ENCODE measurements at regions of chr21 and their contacts with region 1.

Region 1: GRCh38 chr21:42084079-42084478 is 13.0 kb downstream of the UMODL1 start:
- DNase-seq: no peak
- ATAC-seq: no peak
- H3K4me3 ChIP-seq: no peak overlapping the region
- H3K4me3 Mint-ChIP-seq: no peak overlapping the region
- H3K27ac ChIP-seq: no peak overlapping the region
- H3K27ac Mint-ChIP-seq: no peak overlapping the region
- H3K4me1 ChIP-seq: peaks cover 6% of the 10 kb centered on the region
- H3K4me1 Mint-ChIP-seq: peaks cover 12% of the 10 kb centered on the region
- H3K27me3 ChIP-seq: no peaks in the 10 kb centered on the region
- H3K27me3 Mint-ChIP-seq: no peaks in the 10 kb centered on the region
- CTCF ChIP-seq: no peak

Region 2: DNA sequence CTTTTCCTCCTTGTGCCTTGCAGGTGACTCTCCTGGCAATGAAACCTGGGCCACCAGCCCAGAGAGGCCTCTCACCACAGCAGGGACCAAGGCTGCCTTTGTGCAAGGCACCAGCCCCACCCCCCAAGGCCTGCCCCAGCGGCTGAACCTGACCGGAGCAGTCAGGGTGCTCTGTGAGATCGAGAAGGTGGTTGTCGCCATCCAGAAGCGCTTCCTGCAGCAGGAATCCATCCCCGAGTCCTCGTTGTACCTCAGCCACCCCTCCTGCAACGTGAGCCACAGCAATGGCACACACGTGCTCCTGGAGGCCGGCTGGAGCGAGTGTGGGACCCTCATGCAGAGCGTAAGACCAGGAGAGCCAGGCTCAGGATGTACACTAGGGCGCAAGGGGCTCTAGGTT is 38.7 kb after region 1 on chr21:
- CTCF ChIA-PET with region 1: no interaction called
- POLR2A ChIA-PET with region 1: no interaction called
- intact Hi-C with region 1: loop called in 1 of 2 experiments (anchors 1 kb)
- DNase-seq: no peak
- ATAC-seq: no peak
- H3K4me3 ChIP-seq: no peak overlapping the region
- H3K4me3 Mint-ChIP-seq: no peak overlapping the region
- H3K27ac ChIP-seq: no peak overlapping the region
- H3K27ac Mint-ChIP-seq: no peak overlapping the region
- H3K4me1 ChIP-seq: peaks cover 15% of the 10 kb centered on the region
- H3K4me1 Mint-ChIP-seq: peaks cover 19% of the 10 kb centered on the region
- H3K27me3 ChIP-seq: peaks cover 60 to 62% of the 10 kb centered on the region in 2 experiments
- H3K27me3 Mint-ChIP-seq: peaks cover 79% of the 10 kb centered on the region
- CTCF ChIP-seq: no peak